ENCODE measurements at regions of chr13 and their contacts with region 1.

Region 1: GRCh38 chr13:78121459-78122348 is 203.1 kb upstream of the EDNRB start:
- DNase-seq: peak; percentile 3
- H3K4me3 Mint-ChIP-seq: no peak overlapping the region
- H3K27ac Mint-ChIP-seq: no peak overlapping the region
- H3K4me1 Mint-ChIP-seq: no peaks in the 10 kb centered on the region
- H3K27me3 Mint-ChIP-seq: peaks cover 24% of the 10 kb centered on the region
- CTCF ChIP-seq: no peak

Region 2: GRCh38 chr13:77697217-77698103 is 424.2 kb before region 1 on chr13 and contains the start of gene SLAIN1:
- CTCF ChIA-PET with region 1: no interaction called
- intact Hi-C with region 1: loop called (anchors 5 kb)
- DNase-seq: peak; percentile 65
- H3K4me3 Mint-ChIP-seq: peak within 1 kb of the TSS; percentile 73
- H3K27ac Mint-ChIP-seq: no peak within 1 kb of the TSS
- H3K4me1 Mint-ChIP-seq: peaks cover 9% of the 10 kb centered on the region
- H3K27me3 Mint-ChIP-seq: no peaks in the 10 kb centered on the region
- CTCF ChIP-seq: no peak
- total RNA-seq, gene SLAIN1: 4.1 and 4.8 TPM in 2 replicates

Region 3: GRCh38 chr13:77907666-77908341 is 213.9 kb before region 1 on chr13:
- CTCF ChIA-PET with region 1: no interaction called
- intact Hi-C with region 1: no loop called
- DNase-seq: no peak
- H3K4me3 Mint-ChIP-seq: no peak overlapping the region
- H3K27ac Mint-ChIP-seq: no peak overlapping the region
- H3K4me1 Mint-ChIP-seq: no peaks in the 10 kb centered on the region
- H3K27me3 Mint-ChIP-seq: no peaks in the 10 kb centered on the region
- CTCF ChIP-seq: no peak

Region 4: GRCh38 chr13:78649997-78650716 is 528.5 kb after region 1 on chr13:
- CTCF ChIA-PET with region 1: no interaction called
- intact Hi-C with region 1: no loop called
- DNase-seq: no peak
- H3K4me3 Mint-ChIP-seq: no peak overlapping the region
- H3K27ac Mint-ChIP-seq: no peak overlapping the region
- H3K4me1 Mint-ChIP-seq: peaks cover 11% of the 10 kb centered on the region
- H3K27me3 Mint-ChIP-seq: no peaks in the 10 kb centered on the region
- CTCF ChIP-seq: no peak

Measured in Calu3 (cell line).